Activated B cell treated with CpG ODN at 0.5 μM for 24 hours (primary cell): ENCODE measurements at regions of chr20 and their contacts with region 1.

Region 1: GRCh38 chr20:25247956-25248785 is at the start of gene PYGB:
- DNase-seq: peak; percentile 77
- ATAC-seq: peak; percentile 87
- H3K4me3 Mint-ChIP-seq: peak within 1 kb of the TSS; percentile 94
- H3K27ac Mint-ChIP-seq: peak within 1 kb of the TSS; percentile 86
- H3K4me1 Mint-ChIP-seq: peaks cover 25% of the 10 kb centered on the region
- H3K27me3 Mint-ChIP-seq: peaks cover 10% of the 10 kb centered on the region
- CTCF ChIP-seq: no peak
- total RNA-seq, gene PYGB: 21.5 and 23.5 TPM in 2 replicates

Region 2: DNA sequence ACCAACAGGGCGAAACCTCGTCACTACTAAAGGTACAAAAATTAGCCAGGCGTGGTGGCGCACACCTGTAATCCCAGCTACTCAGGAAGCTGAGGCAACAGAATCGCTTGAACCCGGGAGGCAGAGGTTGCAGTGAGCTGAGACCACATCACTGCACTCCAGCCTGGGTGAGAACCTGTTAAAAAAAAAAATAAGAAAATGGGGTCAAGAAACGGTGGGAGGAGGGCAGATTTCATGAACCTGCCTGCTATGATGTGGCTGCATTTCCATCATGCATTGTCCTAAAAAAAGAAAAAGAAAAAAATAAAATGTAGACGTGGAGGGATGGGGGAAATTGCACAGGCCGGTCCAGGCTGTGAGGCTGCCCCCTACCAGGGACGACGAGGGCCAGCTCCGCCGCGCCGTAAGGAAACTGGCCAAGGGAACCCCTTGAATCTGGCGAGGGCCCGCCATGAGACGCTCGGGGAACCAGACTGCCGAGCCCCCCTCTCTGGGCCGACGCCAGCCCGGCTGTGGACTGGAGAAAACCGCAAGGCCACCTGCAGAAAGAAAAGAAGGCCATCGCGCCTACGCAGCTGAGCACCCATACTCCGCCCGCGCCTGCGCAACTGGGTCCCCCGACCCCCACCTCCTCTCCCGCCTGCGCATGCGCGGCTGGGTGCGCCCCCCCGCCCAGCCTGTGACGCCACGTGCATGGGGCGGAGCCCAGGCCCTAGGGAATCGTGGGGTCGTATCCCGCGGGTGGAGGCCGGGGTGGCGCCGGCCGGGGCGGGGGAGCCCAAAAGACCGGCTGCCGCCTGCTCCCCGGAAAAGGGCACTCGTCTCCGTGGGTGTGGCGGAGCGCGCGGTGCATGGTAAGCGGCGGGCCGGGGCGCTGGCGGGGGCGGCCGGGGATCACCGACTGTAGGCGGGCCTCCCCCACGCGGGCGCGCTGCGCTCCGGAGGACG is 52.9 kb before region 1 on chr20 and contains the start of gene ENTPD6:
- CTCF ChIA-PET with region 1: interaction called, 9 read pairs
- POLR2A ChIA-PET with region 1: interaction called, 19 read pairs
- intact Hi-C with region 1: loop called (anchors 1 kb)
- DNase-seq: peak; percentile 99
- ATAC-seq: peak; percentile 82
- H3K4me3 Mint-ChIP-seq: peak within 1 kb of the TSS; percentile 90
- H3K27ac Mint-ChIP-seq: peak within 1 kb of the TSS; percentile 86
- H3K4me1 Mint-ChIP-seq: peaks cover 20% of the 10 kb centered on the region
- H3K27me3 Mint-ChIP-seq: no peaks in the 10 kb centered on the region
- CTCF ChIP-seq: no peak
- total RNA-seq, gene ENTPD6: 37.2 and 44.4 TPM in 2 replicates

Region 3: GRCh38 chr20:25230166-25230831 is 17.9 kb before region 1 on chr20:
- CTCF ChIA-PET with region 1: no interaction called
- POLR2A ChIA-PET with region 1: no interaction called
- intact Hi-C with region 1: loop called (anchors 2 kb)
- DNase-seq: no peak
- ATAC-seq: peak; percentile 49
- H3K4me3 Mint-ChIP-seq: no peak overlapping the region
- H3K27ac Mint-ChIP-seq: no peak overlapping the region
- H3K4me1 Mint-ChIP-seq: peaks cover 11% of the 10 kb centered on the region
- H3K27me3 Mint-ChIP-seq: peaks cover 15% of the 10 kb centered on the region
- CTCF ChIP-seq: no peak

Region 4: DNA sequence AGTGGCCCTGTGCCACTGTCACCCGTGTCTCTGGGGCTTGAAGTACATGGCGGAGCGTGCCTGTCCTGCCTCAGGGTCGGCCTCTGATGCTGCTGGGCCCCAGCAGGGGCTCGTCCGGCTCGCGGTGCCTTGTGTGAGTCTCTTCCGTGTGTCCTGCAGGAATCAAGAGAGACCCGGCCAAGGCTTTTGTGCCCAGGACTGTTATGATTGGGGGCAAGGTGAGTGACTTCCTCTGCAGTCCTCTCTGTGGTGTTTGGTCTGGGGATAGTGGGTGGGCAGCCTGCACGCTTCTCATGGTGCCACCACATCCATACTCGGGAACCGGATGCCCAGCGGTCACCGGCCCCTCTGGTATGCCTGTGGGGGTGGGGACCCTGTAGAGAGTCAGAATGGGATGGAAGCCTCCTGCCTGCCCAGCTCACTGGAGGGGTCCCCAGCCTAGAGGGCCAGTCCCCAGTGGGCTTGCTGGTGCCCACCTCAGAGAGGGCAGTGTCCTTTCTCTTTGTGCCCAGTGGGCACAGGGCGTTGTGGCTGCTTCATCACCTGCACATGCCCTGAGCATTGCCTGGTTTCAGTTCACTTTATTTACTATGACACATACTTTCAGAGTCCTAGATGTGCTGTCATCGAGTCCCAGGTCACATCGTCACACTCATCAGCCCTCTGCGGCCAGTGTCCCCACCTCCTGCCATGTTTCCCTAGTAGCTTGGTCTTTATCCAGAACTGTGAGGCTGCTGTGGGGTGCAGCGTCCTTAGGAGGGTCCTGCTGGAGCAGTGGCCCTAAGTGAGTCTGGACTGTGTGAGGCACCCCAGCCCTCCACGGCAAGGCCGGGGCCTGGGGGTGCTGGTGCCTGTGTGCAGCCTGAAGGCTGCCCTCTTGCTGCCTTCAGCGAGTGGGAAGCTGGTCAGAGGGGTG is 40.4 kb after region 1 on chr20:
- CTCF ChIA-PET with region 1: no interaction called
- POLR2A ChIA-PET with region 1: no interaction called
- intact Hi-C with region 1: loop called (anchors 2 kb)
- DNase-seq: no peak
- ATAC-seq: peak; percentile 92
- H3K4me3 Mint-ChIP-seq: no peak overlapping the region
- H3K27ac Mint-ChIP-seq: no peak overlapping the region
- H3K4me1 Mint-ChIP-seq: peaks cover 7% of the 10 kb centered on the region
- H3K27me3 Mint-ChIP-seq: no peaks in the 10 kb centered on the region
- CTCF ChIP-seq: no peak

Region 5: DNA sequence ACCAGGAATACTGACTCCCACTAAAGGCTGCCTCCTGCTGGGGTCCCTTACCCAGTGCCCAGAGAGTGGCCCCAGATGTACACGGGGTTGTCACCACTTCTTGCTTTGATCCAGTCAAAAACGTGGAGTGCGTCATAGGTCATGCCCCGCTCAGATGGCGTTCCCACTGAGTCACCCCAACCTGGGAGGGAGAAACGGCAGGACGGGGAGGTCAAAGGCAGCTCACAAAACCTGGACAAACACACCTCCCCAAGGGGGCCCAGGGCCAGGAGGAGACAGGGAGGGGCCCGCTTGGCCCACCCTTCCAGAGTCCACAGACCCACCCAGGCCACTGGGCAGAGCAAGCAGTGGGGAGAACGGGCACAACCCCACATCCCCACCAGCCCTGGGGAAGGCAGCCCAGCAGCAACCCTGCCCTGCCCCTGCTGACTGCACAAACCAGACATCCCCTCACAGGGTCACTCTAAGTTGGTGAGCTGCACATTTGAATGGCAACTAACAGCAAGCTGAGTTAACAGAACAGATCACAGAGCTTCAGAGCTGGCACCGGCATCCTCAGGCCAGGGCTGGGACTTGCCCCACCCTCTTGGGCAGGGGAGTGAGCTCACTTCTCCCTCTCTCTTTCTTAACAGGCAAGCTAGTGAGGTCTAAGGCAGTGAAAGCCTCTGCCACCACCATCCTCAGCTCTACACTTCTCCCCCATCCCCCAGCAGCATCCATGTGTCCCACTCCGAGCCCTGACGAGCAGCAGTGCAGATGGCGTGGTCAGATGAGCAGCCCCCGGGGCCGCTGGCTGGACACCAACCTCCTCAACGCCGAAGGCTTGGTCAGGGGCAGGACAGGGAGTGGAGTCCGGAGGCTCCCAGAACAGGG is 61.5 kb after region 1 on chr20:
- CTCF ChIA-PET with region 1: no interaction called
- POLR2A ChIA-PET with region 1: no interaction called
- intact Hi-C with region 1: no loop called
- DNase-seq: no peak
- ATAC-seq: peak; percentile 36
- H3K4me3 Mint-ChIP-seq: no peak overlapping the region
- H3K27ac Mint-ChIP-seq: peak overlapping the region; percentile 56
- H3K4me1 Mint-ChIP-seq: peaks cover 33% of the 10 kb centered on the region
- H3K27me3 Mint-ChIP-seq: no peaks in the 10 kb centered on the region
- CTCF ChIP-seq: no peak